Mammary epithelial cell (primary cell): ENCODE measurements at regions of chr5 and their contacts with region 1.

Region 1: DNA sequence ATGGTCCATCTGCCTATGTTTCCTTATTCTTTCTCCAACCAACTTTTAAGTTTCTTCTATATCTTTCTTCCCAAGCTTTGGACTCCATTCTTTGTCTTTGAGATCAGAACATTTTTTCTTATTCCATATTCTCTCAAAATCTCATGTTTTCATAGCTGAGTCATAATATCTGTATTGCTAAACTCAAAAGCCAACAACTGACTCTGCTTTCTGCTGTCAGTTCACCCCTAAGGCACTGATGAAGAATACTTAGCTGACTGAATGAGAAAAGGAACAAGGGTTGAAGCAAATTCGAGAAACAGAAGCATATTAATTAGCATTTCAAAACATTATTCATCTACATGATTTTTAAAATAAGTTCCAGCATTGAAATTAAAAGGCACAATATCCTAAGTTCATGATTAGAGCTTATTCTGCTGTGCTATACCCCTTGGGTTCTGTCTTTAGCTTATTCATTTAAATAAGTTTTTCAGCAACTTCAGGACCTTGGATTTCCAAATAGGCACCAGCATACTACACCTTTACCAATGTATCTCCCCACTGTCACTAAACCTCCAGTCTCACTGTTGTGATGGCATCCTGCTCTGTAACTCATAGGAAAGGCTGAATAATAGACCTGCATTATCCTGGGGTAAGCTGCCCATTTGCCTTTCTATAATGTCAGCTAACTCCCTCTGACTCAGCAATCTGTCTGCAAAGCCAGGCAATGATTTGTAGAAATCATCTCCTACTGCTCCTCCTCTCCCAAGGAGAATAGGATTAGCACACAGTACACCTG is 49.9 kb upstream of the C5orf46 start:
- DNase-seq: peak; percentile 62
- H3K4me3 ChIP-seq: peak overlapping the region in 2 of 3 experiments; percentile 20 to 22
- H3K27ac ChIP-seq: peak overlapping the region; percentile 16
- H3K4me1 ChIP-seq: peaks cover 21% of the 10 kb centered on the region
- H3K27me3 ChIP-seq: no peaks in the 10 kb centered on the region
- CTCF ChIP-seq: no peak

Region 2: GRCh38 chr5:147857302-147858129 is 98.7 kb before region 1 on chr5:
- CTCF ChIA-PET with region 1: no interaction called
- dilution Hi-C with region 1: no loop called
- in situ Hi-C with region 1: no loop called
- intact Hi-C with region 1: no loop called
- DNase-seq: peak; percentile 44
- H3K4me3 ChIP-seq: no peak overlapping the region
- H3K27ac ChIP-seq: no peak overlapping the region
- H3K4me1 ChIP-seq: no peaks in the 10 kb centered on the region
- H3K27me3 ChIP-seq: no peaks in the 10 kb centered on the region
- CTCF ChIP-seq: peak; percentile 78 to 82

Region 3: DNA sequence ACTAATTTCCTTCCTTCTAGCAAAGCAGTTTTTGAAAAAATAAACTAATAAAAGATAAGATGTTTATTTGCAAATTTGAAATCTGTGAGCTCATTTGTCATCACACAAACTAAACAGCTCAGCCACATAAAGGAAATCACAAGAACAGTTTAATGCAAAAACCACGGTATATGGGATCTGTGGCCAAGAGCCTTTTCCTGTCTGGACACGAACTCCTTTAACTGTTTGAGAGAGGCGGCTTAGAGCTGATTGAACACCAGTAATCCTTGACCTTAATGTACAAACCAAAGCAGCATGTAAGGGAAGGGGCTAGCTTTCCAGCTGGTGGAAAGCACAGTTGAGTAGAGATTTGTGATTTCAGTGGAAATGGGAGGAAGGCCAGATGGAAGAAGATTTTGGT is 41.2 kb after region 1 on chr5:
- CTCF ChIA-PET with region 1: no interaction called
- dilution Hi-C with region 1: no loop called
- in situ Hi-C with region 1: no loop called
- intact Hi-C with region 1: no loop called
- DNase-seq: peak; percentile 7
- H3K4me3 ChIP-seq: no peak overlapping the region
- H3K27ac ChIP-seq: no peak overlapping the region
- H3K4me1 ChIP-seq: peaks cover 4% of the 10 kb centered on the region
- H3K27me3 ChIP-seq: no peaks in the 10 kb centered on the region
- CTCF ChIP-seq: no peak

Region 4: GRCh38 chr5:148011401-148012132 is 55.3 kb after region 1 on chr5:
- CTCF ChIA-PET with region 1: no interaction called
- dilution Hi-C with region 1: no loop called
- in situ Hi-C with region 1: no loop called
- intact Hi-C with region 1: loop called (anchors 2 kb)
- DNase-seq: peak; percentile 92
- H3K4me3 ChIP-seq: no peak overlapping the region
- H3K27ac ChIP-seq: peak overlapping the region; percentile 18
- H3K4me1 ChIP-seq: peaks cover 34% of the 10 kb centered on the region
- H3K27me3 ChIP-seq: no peaks in the 10 kb centered on the region
- CTCF ChIP-seq: no peak